Dendritic cell treated with granulocyte-macrophage colony-stimulating factor and Interleukin-4, amounts not matched to agents 40 ng/mL and 50 ng/mL, for 4 days (primary cell): ENCODE measurements at regions of chr5 and their contacts with region 1.

Region 1: DNA sequence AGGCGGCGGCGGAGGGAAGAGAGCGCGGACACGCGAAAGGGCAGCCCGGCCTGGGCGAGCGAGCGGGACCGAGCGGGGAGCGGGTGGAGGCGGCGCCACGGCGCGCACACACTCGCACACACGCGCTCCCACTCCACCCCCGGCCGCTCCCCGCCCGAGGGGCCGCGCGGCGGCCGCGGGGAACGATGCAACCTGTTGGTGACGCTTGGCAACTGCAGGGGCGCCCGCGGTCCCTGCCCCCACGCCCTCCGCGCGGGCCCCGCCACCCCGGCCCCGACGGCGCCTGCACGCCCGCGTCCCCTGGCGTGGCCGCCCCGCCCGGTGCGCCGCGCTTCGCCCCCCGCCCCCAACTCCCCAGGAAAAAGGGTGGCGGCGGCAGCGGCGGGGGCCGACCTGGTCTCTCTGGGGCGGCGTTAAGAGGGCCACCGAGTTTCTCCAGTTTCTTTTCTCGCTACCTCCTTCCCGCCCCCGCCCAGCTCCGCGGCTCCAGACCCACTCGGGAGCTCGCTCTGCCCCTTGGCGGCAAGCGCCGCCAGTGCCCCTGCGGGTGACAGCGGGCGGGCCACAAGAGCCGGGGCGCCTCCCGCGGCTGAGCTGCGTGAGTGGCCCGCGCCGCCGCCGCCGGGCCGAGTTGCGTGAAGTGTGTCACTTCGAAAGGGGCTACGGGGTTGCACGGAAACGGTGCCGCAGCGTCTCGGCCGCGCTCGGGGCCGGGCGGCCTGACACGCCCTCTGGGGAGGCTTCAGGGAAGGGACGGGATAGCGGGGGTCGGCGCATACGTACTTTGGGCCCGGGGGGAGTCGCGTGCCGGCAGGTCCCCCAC is at the start of gene NR3C1:
- H3K4me3 Mint-ChIP-seq: peak within 1 kb of the TSS; percentile 88
- H3K27ac Mint-ChIP-seq: peak within 1 kb of the TSS; percentile 98
- H3K4me1 Mint-ChIP-seq: peaks cover 42% of the 10 kb centered on the region
- H3K27me3 Mint-ChIP-seq: no peaks in the 10 kb centered on the region

Region 2: GRCh38 chr5:143002459-143003328 is 401.1 kb before region 1 on chr5:
- intact Hi-C with region 1: loop called (anchors 5 kb)
- H3K4me3 Mint-ChIP-seq: peak overlapping the region; percentile 13
- H3K27ac Mint-ChIP-seq: peak overlapping the region; percentile 90
- H3K4me1 Mint-ChIP-seq: peaks cover 81% of the 10 kb centered on the region
- H3K27me3 Mint-ChIP-seq: no peaks in the 10 kb centered on the region

Region 3: DNA sequence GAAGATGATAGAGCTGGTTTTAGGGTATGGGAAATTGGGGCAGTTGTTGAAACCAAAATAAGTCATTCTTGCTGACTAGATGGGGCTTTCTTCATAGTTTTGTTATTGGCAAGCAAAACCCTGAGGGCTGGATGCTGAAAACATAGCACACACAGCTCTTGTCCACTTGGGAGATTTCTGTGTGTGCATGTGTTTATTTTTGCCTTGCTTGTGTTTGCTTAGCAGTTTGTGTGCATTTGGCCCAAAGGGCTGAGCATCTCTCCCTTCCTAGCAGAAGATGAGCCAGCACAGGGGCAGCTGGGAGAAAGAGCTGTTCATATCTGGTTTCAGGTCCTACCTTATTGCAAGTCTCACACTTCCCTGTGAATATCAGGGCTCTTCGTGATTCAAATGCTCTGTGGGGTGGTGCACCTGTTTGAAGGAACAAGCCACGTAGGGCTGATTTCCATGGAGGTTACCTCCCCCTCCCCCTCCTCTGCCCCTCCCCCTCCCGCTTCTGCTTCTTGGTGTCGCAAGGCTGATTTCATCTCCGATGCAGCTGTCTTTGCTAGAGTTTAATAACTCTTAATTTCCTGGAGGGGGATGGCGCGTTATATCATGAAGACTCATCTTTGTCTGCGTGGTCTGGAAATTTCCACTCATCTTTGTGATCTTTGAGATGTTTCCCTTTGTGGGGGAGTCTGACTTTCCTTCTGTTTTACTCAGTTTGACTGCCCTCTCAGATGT is 337.1 kb before region 1 on chr5:
- intact Hi-C with region 1: loop called (anchors 5 kb)
- H3K4me3 Mint-ChIP-seq: peak overlapping the region; percentile 5
- H3K27ac Mint-ChIP-seq: peak overlapping the region; percentile 92
- H3K4me1 Mint-ChIP-seq: peaks cover 66% of the 10 kb centered on the region
- H3K27me3 Mint-ChIP-seq: no peaks in the 10 kb centered on the region

Region 4: GRCh38 chr5:143200781-143201398 is 202.9 kb before region 1 on chr5:
- intact Hi-C with region 1: no loop called
- H3K4me3 Mint-ChIP-seq: no peak overlapping the region
- H3K27ac Mint-ChIP-seq: no peak overlapping the region
- H3K4me1 Mint-ChIP-seq: peaks cover 1% of the 10 kb centered on the region
- H3K27me3 Mint-ChIP-seq: no peaks in the 10 kb centered on the region

Region 5: DNA sequence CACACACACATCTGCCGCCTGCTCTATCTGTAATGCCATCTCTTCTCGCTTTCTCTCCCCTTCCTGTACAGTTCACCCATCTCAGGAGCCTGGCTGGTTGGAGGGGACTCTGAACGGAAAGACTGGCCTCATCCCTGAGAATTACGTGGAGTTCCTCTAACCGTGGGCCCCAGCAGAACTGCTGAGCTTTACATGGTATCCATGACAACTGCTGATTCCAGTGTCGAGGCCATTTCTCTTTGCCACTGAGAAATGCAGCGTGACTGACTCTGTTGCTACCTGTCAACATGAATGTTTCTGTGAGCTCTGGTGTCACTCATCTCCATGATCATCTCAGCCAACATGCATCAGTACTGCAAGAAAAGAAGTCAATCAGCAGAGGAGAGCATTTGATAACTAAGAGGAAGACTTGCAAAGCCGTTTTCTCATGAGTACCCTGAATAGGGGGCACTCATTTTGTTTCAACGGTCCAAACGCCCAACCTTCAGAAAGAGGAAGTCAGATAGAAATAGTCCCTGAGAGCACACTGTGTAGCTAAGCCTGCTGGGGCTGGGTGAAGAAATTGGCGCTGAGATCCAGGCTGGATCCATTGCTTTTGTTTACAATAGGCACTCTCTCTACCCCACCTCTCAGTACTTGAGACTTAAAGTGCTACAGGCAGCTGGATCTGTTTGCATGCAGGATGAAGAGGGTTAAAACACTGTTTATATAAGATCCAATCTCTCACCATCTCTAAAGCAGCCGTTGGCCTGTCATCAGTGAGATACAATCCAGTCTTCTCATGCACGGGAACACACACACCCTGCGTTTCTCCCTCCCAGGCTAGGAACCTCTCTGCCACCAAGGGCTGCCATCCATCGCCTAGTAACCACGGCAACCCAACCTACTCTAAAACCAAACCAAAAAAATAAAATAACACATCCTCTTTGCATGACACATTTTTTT is 181.2 kb before region 1 on chr5:
- intact Hi-C with region 1: loop called (anchors 5 kb)
- H3K4me3 Mint-ChIP-seq: no peak overlapping the region
- H3K27ac Mint-ChIP-seq: peak overlapping the region; percentile 76
- H3K4me1 Mint-ChIP-seq: peaks cover 57% of the 10 kb centered on the region
- H3K27me3 Mint-ChIP-seq: no peaks in the 10 kb centered on the region

Region 6: GRCh38 chr5:143564417-143564816 is 160.6 kb after region 1 on chr5:
- intact Hi-C with region 1: loop called (anchors 10 kb)
- H3K4me3 Mint-ChIP-seq: no peak overlapping the region
- H3K27ac Mint-ChIP-seq: no peak overlapping the region
- H3K4me1 Mint-ChIP-seq: peaks cover 27% of the 10 kb centered on the region
- H3K27me3 Mint-ChIP-seq: peaks cover 5% of the 10 kb centered on the region

Region 7: DNA sequence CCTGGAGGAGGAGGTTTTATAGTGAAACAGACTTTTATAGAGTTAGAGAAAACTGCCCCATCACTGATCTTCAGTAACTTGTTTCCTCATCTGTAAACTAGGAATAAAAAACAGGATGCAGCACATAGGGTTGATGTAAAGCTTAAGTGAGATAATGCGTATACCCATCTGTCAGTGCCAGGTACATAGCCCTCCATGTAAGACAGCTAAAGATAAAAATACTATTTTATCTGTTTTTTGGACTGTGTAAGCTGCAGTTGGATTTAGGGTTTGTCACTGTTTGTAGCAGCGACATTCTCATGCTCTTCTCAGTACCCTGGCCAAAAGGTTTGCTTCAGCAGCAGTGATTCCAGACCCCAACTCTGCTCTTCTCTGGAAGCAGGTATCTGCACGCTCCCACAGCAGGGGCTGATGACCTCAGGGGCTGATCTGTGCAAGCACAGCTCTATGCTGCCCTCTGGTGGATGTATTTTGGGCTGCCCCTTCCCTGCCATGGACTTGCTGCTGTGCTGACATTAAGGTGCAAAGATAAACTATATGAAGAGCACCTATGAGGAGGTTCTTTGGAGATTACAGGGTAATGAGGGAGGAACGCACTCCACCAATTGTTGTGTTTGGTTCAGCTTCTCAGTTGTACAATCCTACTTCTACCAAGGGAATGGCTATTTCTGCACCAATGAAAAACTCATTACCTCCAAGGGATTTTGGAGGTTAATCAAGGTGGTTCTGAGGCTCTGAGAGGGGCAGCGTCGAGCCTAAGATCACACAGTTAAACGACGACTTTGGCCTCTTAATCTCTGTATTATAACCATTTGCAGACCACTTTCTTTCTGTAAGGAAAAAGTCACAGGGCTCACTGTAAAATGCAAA is 421.3 kb after region 1 on chr5:
- intact Hi-C with region 1: loop called (anchors 10 kb)
- H3K4me3 Mint-ChIP-seq: no peak overlapping the region
- H3K27ac Mint-ChIP-seq: no peak overlapping the region
- H3K4me1 Mint-ChIP-seq: no peaks in the 10 kb centered on the region
- H3K27me3 Mint-ChIP-seq: no peaks in the 10 kb centered on the region

Region 8: GRCh38 chr5:144169904-144170275 is 766.1 kb after region 1 on chr5:
- intact Hi-C with region 1: loop called (anchors 10 kb)
- H3K4me3 Mint-ChIP-seq: peak overlapping the region; percentile 90
- H3K27ac Mint-ChIP-seq: peak overlapping the region; percentile 92
- H3K4me1 Mint-ChIP-seq: peaks cover 14% of the 10 kb centered on the region
- H3K27me3 Mint-ChIP-seq: peaks cover 21% of the 10 kb centered on the region